ENCODE measurements at regions of chr4 and their contacts with region 1.

Region 1: GRCh38 chr4:103075901-103076739 is 441 bp downstream of the SLC9B2 start:
- DNase-seq: peak; percentile 71
- H3K4me3 Mint-ChIP-seq: peak overlapping the region; percentile 85
- H3K27ac Mint-ChIP-seq: peak overlapping the region; percentile 98
- H3K4me1 Mint-ChIP-seq: peaks cover 47% of the 10 kb centered on the region
- H3K27me3 Mint-ChIP-seq: no peaks in the 10 kb centered on the region

Region 2: DNA sequence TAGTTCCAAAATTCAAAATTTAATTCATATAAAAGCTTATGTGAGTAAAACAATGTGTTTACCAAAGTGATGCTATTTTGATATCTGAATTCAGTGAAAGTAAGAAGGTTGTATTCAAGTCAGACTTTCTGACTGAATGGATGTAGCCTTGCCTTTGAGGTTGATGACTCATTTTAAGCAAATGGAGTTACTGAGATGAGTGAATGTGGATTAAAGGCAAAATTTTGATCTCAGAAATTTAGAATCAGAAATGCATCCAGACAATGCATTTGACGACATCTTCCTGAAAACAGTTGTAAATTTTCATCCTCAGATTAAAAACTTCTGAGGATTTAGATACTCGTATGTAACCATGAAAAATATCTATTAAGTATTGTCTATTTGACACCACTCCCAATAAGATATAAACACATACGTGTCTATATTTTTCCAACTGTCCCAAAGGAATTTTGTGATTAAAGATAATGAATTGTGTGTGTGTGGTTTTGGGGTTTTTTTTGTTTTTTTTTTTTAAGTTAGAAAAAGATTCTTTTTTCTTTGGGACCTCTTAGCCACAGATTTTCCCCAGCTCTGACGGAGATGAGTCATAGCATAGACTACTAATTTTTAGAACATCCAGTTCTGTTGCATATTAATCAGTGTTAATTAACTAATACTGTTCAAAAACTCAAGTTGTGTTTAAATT is 540.6 kb before region 1 on chr4:
- CTCF ChIA-PET with region 1: no interaction called
- POLR2A ChIA-PET with region 1: no interaction called
- DNase-seq: no peak
- H3K4me3 Mint-ChIP-seq: no peak overlapping the region
- H3K27ac Mint-ChIP-seq: no peak overlapping the region
- H3K4me1 Mint-ChIP-seq: peaks cover 56% of the 10 kb centered on the region
- H3K27me3 Mint-ChIP-seq: no peaks in the 10 kb centered on the region

Region 3: GRCh38 chr4:102815981-102816380 is 260.1 kb before region 1 on chr4:
- CTCF ChIA-PET with region 1: no interaction called
- POLR2A ChIA-PET with region 1: no interaction called
- DNase-seq: no peak
- H3K4me3 Mint-ChIP-seq: no peak overlapping the region
- H3K27ac Mint-ChIP-seq: no peak overlapping the region
- H3K4me1 Mint-ChIP-seq: peaks cover 84% of the 10 kb centered on the region
- H3K27me3 Mint-ChIP-seq: no peaks in the 10 kb centered on the region

Region 4: DNA sequence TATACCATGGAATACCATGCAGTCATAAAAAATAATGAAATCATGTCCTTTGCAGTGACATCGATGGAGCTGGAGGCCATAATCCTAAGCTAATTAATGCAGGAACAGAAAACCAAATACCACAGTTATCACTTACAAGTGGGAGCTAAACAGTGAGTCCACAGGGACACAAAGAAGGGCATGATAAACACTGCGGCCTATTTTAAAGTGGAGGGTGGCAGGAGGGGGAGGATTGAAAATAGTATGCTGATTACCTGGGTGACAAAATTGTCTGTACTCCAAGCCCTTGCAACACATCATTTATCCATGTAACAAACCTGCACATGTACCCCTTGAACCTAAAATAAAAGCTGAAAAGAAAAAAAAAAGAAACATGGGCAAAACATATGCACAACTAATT is 40.0 kb before region 1 on chr4:
- CTCF ChIA-PET with region 1: no interaction called
- POLR2A ChIA-PET with region 1: no interaction called
- DNase-seq: no peak
- H3K4me3 Mint-ChIP-seq: no peak overlapping the region
- H3K27ac Mint-ChIP-seq: peak overlapping the region; percentile 58
- H3K4me1 Mint-ChIP-seq: peaks cover 20% of the 10 kb centered on the region
- H3K27me3 Mint-ChIP-seq: no peaks in the 10 kb centered on the region

Region 5: GRCh38 chr4:103091601-103092223 is 15.6 kb after region 1 on chr4:
- CTCF ChIA-PET with region 1: interaction called, 47 read pairs
- POLR2A ChIA-PET with region 1: no interaction called
- DNase-seq: peak; percentile 73
- H3K4me3 Mint-ChIP-seq: peak overlapping the region; percentile 56
- H3K27ac Mint-ChIP-seq: peak overlapping the region; percentile 77
- H3K4me1 Mint-ChIP-seq: peaks cover 25% of the 10 kb centered on the region
- H3K27me3 Mint-ChIP-seq: no peaks in the 10 kb centered on the region

Region 6: DNA sequence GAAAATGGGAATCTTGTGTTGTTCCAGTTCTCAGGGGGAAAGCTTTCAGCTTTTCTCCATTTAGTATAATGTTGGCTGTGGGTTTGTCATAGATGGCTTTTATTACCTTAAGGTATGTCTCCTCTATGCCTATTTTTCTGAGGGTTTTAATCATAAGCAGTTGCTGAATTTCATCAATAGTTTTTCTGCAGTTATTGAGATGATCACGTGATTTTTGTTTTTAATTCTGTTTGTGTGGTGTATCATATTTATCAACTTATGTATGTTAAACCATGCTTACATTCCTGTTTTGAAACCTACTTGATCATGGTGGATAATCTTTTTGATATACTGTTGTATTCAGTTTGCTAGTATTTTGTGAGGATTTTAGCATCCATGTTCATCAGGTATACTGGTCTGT is 188.8 kb after region 1 on chr4:
- CTCF ChIA-PET with region 1: no interaction called
- POLR2A ChIA-PET with region 1: no interaction called
- DNase-seq: no peak
- H3K4me3 Mint-ChIP-seq: no peak overlapping the region
- H3K27ac Mint-ChIP-seq: no peak overlapping the region
- H3K4me1 Mint-ChIP-seq: no peaks in the 10 kb centered on the region
- H3K27me3 Mint-ChIP-seq: peaks cover 20% of the 10 kb centered on the region

Measured in activated CD4-positive, alpha-beta T cell treated with anti-CD3 and anti-CD28 coated beads, Interleukin-2, amount 10 ng/mL, durations not matched to agents 7 days and 5 days (primary cell).